ENCODE measurements at regions of chr14 and their contacts with region 1.

Region 1: DNA sequence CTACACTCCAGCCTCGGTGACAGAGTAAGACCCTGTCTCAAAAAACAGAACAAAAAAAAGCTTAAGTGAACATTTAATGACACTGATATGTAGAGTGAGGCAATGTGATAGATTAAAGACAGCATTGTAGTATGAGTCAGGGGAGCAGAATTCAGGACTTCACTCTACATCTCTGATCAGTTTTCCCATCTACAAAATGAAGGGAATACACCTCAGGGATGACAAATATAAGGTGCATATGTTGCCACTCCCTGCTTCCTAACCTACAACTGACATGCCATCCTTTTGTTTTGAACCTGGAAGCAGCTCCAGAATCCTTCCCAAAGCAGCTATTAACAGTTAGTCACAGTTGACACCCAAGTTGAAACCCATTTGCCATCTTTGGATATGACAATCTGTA is 30.9 kb upstream of the STRN3 start:
- DNase-seq: no peak

Region 2: GRCh38 chr14:31038521-31039166 is 18.4 kb before region 1 on chr14:
- CTCF ChIA-PET with region 1: interaction called, 11 read pairs
- POLR2A ChIA-PET with region 1: no interaction called
- DNase-seq: no peak

Region 3: DNA sequence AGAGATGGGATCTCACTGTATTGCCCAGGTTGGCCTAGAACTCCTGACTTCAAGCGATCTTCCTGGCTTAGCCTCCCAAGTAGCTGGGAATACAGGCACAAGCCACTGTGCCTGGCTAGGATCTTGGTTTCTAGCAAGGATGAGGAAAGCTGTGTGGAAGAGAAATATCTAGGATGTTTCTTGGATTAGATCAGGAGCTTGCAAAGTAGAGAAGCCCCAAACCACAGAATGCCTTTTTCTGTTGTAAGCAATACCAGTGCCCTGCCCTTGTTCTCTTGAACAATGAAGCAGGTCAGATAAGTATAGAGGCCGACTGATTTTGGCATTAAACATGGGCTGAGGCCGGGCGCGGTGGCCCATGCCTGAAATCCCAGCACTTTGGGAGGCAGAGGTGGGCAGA is 13.4 kb after region 1 on chr14:
- CTCF ChIA-PET with region 1: no interaction called
- POLR2A ChIA-PET with region 1: no interaction called
- DNase-seq: no peak

Measured in HEK293T (cell line).